ENCODE measurements at regions of chr11 and their contacts with region 1.

Region 1: GRCh38 chr11:6603287-6604080 is at the starts of genes ILK and RRP8:
- DNase-seq: peak; percentile 96
- ATAC-seq: peak; percentile 90
- total RNA-seq, gene ILK: 233 TPM
- total RNA-seq, gene RRP8: 22.9 TPM

Region 2: DNA sequence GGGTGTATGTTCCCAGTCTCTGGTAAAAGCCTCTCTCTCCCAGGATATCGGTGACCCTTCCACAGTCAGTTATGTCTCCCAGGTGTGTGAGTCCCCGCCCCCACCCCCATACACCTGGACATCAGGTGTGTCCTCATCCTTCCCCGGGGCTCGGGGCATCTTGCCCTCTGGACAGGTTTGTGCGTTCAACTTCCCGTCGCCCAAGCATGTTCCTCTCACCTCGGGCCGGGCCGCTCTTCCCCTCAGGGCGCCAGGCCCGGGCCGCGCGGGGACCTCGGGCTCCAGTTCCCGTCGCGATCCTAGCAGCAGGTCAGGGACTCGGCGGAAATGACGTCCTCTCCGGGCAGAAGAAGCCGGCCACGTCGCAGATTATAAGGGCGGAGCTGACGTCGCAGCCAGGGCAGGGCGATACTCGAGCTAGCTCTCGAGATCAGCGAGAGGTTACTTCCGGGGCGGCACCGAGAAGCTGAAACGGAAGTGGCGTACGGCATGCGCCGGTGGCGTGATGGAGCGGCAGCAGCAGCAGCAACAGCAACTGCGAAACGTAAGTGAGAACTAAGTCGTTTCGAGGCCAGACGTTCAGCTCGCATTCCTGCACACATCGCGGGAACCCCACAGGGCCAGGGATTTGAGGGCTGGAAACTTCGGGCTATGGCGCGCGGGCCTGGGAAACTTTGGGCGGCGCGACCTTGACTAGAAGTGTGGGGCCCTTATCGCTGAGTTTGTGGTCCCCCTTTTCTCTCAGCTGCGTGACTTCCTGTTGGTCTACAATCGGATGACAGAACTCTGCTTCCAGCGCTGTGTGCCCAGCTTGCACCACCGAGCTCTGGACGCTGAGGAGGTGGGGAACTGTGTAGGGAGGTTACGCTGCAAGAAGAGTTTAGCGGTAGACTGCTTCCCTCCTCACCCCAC is 122.2 kb before region 1 on chr11 and contains the starts of genes ARFIP2 and TIMM10B:
- intact Hi-C with region 1: loop called (anchors 5 kb)
- DNase-seq: peak; percentile 100
- ATAC-seq: peak; percentile 98
- total RNA-seq, gene ARFIP2: 15.1 TPM
- total RNA-seq, gene TIMM10B: 14.1 TPM

Region 3: DNA sequence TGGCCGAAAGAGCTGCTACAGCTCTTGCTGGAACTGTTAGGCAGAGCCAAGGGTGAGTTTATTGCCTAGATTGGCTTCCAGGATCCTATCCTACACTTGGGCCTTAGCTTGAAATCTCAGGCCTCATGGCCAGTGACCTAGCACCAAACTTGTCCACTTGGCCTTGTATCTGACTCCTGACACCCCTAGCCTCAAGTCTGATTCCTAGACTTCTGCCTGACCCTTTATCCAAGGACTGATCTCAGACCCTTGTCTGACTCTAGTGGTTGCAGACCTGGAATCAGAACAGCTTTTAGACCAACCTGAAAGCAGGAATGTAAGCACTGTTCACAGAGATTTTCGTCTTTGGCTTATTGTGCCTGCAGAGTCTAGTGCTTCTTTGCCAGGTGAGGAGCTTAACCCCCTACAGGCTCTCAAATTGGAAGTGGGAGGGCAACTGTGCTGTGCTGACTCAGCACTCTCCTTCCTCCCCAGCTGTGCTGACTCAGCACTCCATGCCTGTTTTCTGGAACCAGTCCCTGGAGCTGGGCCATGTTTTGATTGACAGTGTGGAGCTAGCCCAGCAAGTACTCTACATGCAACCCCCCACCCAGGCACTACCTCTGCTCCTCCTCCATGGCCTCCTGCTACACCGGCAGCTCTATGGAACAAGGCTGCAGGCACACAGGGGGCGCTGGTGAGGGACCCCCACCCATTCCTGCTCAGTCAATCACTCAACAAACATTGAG is 35.1 kb before region 1 on chr11:
- intact Hi-C with region 1: loop called (anchors 5 kb)
- DNase-seq: no peak
- ATAC-seq: peak; percentile 55